ENCODE measurements at regions of chr2 and their contacts with region 1.

Region 1: DNA sequence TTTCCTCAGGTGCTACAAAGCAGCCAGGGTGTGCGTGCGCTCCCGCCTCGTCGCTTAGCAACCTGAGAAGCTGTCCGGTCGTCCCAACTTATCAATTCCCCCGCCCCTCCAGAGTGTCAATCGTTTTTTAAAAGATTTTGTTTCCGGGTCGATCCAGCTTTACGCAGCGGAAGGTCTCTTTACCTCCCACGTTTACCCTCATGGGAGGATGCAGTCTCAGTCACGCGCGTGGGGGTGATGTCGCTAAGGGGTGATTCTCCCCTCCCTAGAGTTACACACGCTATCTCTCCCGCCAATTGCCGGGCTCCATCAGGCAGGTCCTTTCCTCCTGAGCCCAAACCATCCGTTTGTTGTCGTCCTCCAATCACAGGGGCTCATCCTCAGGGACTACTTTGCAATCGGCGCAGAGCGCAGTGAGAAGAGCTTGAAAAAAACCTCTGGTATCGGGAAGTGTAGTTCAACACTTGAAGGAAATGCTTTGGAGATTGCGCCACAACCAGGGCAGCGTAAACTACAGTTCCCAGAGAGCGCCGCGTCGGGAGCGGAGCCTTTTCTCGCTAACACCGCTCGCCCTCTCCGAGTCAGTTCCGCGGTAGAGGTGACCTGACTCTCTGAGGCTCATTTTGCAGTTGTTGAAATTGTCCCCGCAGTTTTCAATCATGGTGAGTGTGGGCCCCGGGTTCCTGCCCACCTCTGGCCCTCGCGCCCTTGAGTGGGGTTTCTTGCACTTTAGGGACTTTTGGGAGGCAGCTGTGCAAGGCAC is at the starts of genes MDH1 and WDPCP:
- DNase-seq: peak; percentile 97
- H3K4me3 Mint-ChIP-seq: peak within 1 kb of the TSS; percentile 99
- H3K27ac Mint-ChIP-seq: peak within 1 kb of the TSS; percentile 92
- H3K4me1 Mint-ChIP-seq: peaks cover 35% of the 10 kb centered on the region
- H3K27me3 Mint-ChIP-seq: no peaks in the 10 kb centered on the region
- total RNA-seq, gene MDH1: 261 to 268 TPM
- total RNA-seq, gene WDPCP: 4.4 to 5.0 TPM

Region 2: GRCh38 chr2:62705007-62705829 is 883.3 kb before region 1 on chr2 and contains the start of gene EHBP1:
- CTCF ChIA-PET with region 1: no interaction called
- POLR2A ChIA-PET with region 1: no interaction called
- intact Hi-C with region 1: loop called (anchors 1 kb)
- DNase-seq: peak; percentile 98
- H3K4me3 Mint-ChIP-seq: peak within 1 kb of the TSS; percentile 76
- H3K27ac Mint-ChIP-seq: peak within 1 kb of the TSS; percentile 74
- H3K4me1 Mint-ChIP-seq: peaks cover 28% of the 10 kb centered on the region
- H3K27me3 Mint-ChIP-seq: no peaks in the 10 kb centered on the region
- total RNA-seq, gene EHBP1: 23.5 to 23.6 TPM

Region 3: GRCh38 chr2:63569740-63570139 is 18.8 kb before region 1 on chr2:
- CTCF ChIA-PET with region 1: no interaction called
- POLR2A ChIA-PET with region 1: no interaction called
- intact Hi-C with region 1: no loop called
- DNase-seq: no peak
- H3K4me3 Mint-ChIP-seq: no peak overlapping the region
- H3K27ac Mint-ChIP-seq: no peak overlapping the region
- H3K4me1 Mint-ChIP-seq: no peaks in the 10 kb centered on the region
- H3K27me3 Mint-ChIP-seq: no peaks in the 10 kb centered on the region

Region 4: GRCh38 chr2:63856303-63856603 is 267.7 kb after region 1 on chr2:
- CTCF ChIA-PET with region 1: interaction called, 9 read pairs
- POLR2A ChIA-PET with region 1: no interaction called
- intact Hi-C with region 1: loop called (anchors 1 kb)
- DNase-seq: peak; percentile 77
- H3K4me3 Mint-ChIP-seq: peak overlapping the region; percentile 54
- H3K27ac Mint-ChIP-seq: peak overlapping the region; percentile 90
- H3K4me1 Mint-ChIP-seq: peaks cover 59% of the 10 kb centered on the region
- H3K27me3 Mint-ChIP-seq: no peaks in the 10 kb centered on the region

Region 5: DNA sequence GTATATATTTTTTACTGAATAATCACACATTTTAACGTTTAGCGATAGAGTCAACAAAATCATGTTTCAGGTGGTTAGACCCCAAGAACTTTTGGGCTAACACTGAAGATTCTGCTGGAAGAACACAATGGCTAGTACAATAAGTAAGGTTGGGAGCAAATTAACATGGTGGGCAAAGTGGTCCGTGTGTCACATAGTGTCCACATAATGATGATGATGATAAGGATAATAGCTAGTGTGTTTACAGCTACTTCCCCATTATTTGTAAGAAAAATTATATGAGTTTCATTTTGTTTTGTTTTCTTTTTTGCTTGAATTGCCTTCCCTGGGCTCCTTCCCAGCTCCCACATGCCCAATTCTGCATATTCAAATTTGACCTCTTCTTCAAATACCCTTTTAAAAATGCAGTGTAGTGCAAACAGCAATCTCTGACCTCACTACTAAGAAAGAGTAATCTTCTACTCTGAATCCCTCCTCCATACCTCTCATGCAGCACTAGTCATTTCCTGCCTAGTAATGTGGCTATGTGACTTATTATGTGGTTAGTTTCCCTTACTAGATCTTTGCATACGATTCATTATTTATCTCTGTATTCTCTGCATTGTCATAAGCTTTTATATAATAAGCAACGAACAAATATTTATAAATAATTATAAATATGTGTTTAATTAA is 447.6 kb after region 1 on chr2:
- CTCF ChIA-PET with region 1: no interaction called
- POLR2A ChIA-PET with region 1: no interaction called
- intact Hi-C with region 1: loop called (anchors 5 kb)
- DNase-seq: peak; percentile 27
- H3K4me3 Mint-ChIP-seq: peak overlapping the region; percentile 3
- H3K27ac Mint-ChIP-seq: peak overlapping the region; percentile 75
- H3K4me1 Mint-ChIP-seq: peaks cover 48% of the 10 kb centered on the region
- H3K27me3 Mint-ChIP-seq: peaks cover 2% of the 10 kb centered on the region

Region 6: GRCh38 chr2:64988420-64989125 is 1400.0 kb after region 1 on chr2:
- CTCF ChIA-PET with region 1: no interaction called
- POLR2A ChIA-PET with region 1: no interaction called
- intact Hi-C with region 1: loop called (anchors 10 kb)
- DNase-seq: peak; percentile 81
- H3K4me3 Mint-ChIP-seq: peak overlapping the region; percentile 59
- H3K27ac Mint-ChIP-seq: peak overlapping the region; percentile 65
- H3K4me1 Mint-ChIP-seq: peaks cover 54% of the 10 kb centered on the region
- H3K27me3 Mint-ChIP-seq: peaks cover 5% of the 10 kb centered on the region

Measured in activated CD4-positive, alpha-beta memory T cell treated with anti-CD3 and anti-CD28 coated beads for 36 hours (primary cell).